ENCODE measurements at regions of chr4 and their contacts with region 1.

Region 1: GRCh38 chr4:54120518-54120917 is 20.6 kb downstream of the GSX2 start:
- DNase-seq: no peak
- ATAC-seq: no peak
- H3K4me3 ChIP-seq: no peak overlapping the region
- H3K27ac ChIP-seq: no peak overlapping the region
- H3K4me1 ChIP-seq: no peaks in the 10 kb centered on the region
- H3K27me3 ChIP-seq: peaks cover 0 to 14% (median 0%) of the 10 kb centered on the region in 9 donors
- CTCF ChIP-seq: no peak
- POLR2A ChIP-seq: no peak

Region 2: DNA sequence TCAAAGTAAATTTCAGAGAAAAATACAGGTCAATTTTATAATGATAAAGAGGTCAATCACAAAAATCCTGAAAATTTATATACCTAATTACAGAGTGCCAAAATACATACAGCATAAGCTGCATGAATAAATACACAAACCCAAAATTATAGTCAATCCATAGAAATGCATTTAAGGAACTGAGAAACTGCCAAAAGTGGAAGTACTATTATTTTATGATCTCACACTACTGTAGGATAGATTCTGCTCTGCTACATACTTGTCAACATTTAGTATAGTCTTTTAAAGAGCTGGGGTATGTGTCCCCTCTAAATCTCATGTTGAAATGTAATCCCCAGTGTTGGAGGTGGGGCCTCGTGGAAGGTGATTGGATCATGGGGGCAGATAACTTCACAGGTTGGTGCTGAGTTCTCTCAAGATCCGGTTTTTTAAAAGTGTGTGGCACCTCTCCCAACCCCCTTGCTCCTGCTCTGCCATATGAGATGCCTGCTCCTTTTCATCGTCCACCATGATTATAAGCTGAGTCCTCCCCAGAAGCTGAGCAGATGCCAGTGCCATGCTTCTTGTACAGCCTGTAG is 87.9 kb before region 1 on chr4:
- intact Hi-C with region 1: no loop called
- DNase-seq: no peak
- ATAC-seq: no peak
- H3K4me3 ChIP-seq: no peak overlapping the region
- H3K27ac ChIP-seq: no peak overlapping the region
- H3K4me1 ChIP-seq: peaks cover 0 to 16% (median 0%) of the 10 kb centered on the region in 12 donors
- H3K27me3 ChIP-seq: no peaks in the 10 kb centered on the region
- CTCF ChIP-seq: no peak
- POLR2A ChIP-seq: no peak

Region 3: GRCh38 chr4:54187148-54187547 is 66.6 kb after region 1 on chr4:
- intact Hi-C with region 1: loop called in 1 of 10 experiments (anchors 10 kb)
- DNase-seq: peak in 4 of 5 donors; percentile 40 to 55 (median 44)
- ATAC-seq: peak; percentile 69 to 97 (median 89)
- H3K4me3 ChIP-seq: no peak overlapping the region
- H3K27ac ChIP-seq: no peak overlapping the region
- H3K4me1 ChIP-seq: peaks cover 0 to 8% (median 0%) of the 10 kb centered on the region in 12 donors
- H3K27me3 ChIP-seq: no peaks in the 10 kb centered on the region
- CTCF ChIP-seq: peak in 10 of 12 donors; percentile 15 to 44 (median 32)
- POLR2A ChIP-seq: no peak

Measured in heart left ventricle (tissue), 16 donors.